Astrocyte of the cerebellum (primary cell): ENCODE measurements at regions of chr7 and their contacts with region 1.

Region 1: GRCh38 chr7:37901236-37901827 is 15.3 kb downstream of the SFRP4 start:
- DNase-seq: peak; percentile 59
- H3K4me3 ChIP-seq: no peak overlapping the region
- CTCF ChIP-seq: peak; percentile 42

Region 2: DNA sequence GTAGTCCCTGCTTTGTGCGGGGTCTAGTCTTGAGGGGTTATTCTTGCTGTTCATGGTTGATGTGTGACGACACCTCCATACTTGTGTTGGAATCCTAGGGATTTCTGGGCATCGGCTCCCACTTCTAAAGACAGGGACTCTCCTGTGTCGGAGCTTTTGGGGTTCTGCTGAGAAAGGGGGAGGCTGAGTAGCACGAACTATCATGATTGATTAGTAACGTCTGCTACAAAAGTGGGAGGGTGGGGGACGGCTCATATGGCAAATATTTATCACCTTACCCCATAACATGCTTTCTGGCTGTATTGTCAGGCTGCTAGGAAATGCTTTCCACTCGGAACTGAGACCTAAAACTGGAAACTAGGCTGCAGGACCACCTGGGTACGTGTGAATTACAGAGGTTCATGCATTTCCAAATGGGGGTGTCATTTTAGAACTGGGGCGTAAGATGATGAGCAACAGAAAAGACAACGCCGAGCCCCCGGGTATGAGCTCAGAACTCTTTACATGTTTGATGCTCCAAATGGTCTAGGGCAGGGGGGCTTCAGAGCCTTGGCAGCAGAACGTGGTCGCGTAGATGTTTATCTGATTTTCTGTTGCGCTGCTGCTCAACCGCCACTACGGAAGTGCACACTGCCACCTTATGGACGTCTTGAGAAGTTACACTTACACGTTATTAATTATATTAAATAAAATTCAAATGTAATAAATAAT is 68.1 kb before region 1 on chr7:
- in situ Hi-C with region 1: no loop called
- DNase-seq: peak; percentile 28
- H3K4me3 ChIP-seq: peak overlapping the region; percentile 5
- CTCF ChIP-seq: peak; percentile 66

Region 3: GRCh38 chr7:38222481-38223096 is 321.3 kb after region 1 on chr7:
- in situ Hi-C with region 1: loop called (anchors 10 kb)
- DNase-seq: peak; percentile 61
- H3K4me3 ChIP-seq: no peak overlapping the region
- CTCF ChIP-seq: peak; percentile 78

Region 4: DNA sequence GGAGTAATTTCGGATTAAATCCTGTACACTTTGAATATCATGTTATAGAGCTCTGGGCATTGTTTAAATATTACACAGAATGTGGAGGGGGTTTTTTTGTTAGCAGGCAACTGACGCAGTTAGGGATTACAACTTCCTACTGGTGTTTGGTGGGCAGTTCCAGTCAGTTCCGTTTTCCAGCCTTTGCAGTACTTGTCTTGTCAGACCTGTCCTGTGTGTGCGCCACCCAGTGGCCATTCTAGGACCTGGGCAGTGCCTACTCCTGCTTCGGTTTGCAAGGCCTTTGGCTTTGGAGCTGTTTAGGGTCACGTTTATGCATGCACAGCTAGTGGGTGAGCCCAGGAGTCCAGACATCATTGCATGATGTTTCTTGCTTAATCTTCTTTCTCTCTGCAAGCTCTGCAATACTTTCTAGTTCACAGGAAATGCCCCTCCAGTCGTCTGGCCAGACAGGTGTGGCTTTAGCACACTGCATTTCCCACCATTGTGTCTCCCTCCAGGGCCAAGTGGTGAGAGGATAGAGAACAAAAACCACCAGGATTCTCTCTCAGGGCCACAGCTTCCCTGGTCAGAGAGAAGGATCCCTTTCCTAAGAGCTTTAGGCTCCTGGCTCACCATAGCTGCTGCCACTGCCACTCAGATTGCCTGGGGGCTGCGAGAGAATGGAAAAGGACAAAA is 468.6 kb after region 1 on chr7:
- in situ Hi-C with region 1: loop called (anchors 10 kb)
- DNase-seq: peak; percentile 70
- H3K4me3 ChIP-seq: no peak overlapping the region
- CTCF ChIP-seq: peak; percentile 94